Calu3 (cell line): ENCODE measurements at regions of chr21 and their contacts with region 1.

Region 1: DNA sequence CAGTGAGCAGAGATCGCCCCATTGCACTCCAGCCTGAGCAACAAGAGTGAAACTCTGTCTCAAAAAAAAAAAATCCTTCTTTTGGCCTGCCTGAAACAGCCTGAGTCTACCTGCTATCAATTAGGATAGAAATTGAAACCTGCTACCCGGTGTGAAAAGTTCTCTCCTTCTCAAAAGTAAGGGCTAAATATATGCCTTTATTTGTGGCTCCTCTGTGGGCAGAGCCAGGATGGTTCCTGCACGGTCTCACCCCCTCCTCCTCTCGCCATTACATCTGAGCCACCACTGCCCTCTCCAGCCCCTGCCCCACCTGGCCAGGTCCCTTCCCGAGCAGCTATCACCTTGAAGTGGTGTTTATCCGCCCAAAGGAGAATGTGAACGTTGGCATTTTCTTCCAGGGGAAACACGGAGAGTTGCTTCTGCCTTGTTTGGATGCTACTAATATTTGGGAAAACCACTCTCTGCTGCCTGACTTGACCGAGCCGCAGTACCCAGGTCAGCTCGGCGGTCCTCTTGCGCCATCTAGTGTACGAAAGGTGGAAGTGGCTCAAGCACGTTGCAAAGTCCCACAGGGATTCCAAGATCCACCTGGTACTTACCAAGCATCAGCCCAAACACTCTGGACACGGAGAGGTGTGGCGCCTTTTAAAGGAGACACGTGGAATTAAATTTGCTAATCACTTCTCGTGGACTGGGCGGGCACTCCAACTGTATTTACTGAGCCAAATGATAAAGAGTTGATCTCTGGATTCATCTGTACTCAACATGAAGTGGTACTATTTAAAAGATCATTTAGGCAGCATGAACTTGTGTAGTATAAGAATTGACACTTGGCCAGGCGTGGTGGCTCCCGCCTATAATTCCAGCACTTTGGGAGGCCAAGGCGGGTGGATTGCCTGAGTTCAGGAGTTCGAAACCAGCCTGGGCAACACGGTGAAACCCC is 31.9 kb downstream of the SETD4 start:
- DNase-seq: peak; percentile 65
- H3K4me3 Mint-ChIP-seq: no peak overlapping the region
- H3K27ac Mint-ChIP-seq: no peak overlapping the region
- H3K4me1 Mint-ChIP-seq: no peaks in the 10 kb centered on the region
- H3K27me3 Mint-ChIP-seq: no peaks in the 10 kb centered on the region
- CTCF ChIP-seq: peak; percentile 80

Region 2: GRCh38 chr21:35925497-35925896 is 102.9 kb before region 1 on chr21:
- CTCF ChIA-PET with region 1: no interaction called
- intact Hi-C with region 1: no loop called
- DNase-seq: peak; percentile 65
- H3K4me3 Mint-ChIP-seq: no peak overlapping the region
- H3K27ac Mint-ChIP-seq: peak overlapping the region; percentile 94
- H3K4me1 Mint-ChIP-seq: peaks cover 32% of the 10 kb centered on the region
- H3K27me3 Mint-ChIP-seq: no peaks in the 10 kb centered on the region
- CTCF ChIP-seq: no peak

Region 3: DNA sequence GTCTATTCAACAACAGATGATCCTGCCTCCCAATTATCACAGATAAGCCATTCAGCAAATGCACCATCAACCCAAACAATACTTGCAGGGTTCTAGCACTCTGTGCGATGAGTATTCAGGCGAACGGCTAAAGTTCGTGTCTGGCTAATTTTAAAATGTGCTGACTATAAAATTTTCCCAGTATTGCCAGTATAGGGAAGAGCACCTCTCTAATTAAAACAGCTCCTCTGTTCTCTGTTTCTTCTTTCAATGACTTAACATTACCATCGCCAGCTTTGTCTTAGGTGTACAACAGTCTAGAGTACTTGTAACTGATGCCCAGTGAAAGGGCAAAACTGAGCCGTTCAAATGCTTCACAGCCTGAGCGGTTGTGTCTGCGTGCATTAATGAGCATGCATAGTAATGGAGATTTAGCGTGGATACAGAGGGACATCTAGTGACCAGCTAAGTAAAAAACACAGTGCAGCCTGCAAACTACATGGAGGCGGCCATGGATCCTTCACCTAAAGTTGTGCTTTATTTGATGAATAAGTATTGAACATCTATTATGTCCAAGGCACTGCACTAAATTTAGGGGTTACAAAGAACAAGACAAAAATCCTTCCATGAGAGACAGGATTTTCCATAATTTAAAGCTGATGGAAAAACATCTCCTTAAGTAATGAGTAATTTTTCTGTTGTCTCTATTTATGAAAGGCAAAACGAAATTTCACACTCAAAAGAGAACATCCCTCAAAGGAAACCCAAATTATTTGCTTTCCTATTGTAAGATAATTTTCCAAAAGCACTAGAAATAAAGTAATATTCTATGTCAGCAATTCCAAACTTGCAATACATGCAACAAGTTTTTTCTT is 88.1 kb before region 1 on chr21:
- CTCF ChIA-PET with region 1: no interaction called
- intact Hi-C with region 1: loop called (anchors 5 kb)
- DNase-seq: peak; percentile 41
- H3K4me3 Mint-ChIP-seq: no peak overlapping the region
- H3K27ac Mint-ChIP-seq: no peak overlapping the region
- H3K4me1 Mint-ChIP-seq: no peaks in the 10 kb centered on the region
- H3K27me3 Mint-ChIP-seq: no peaks in the 10 kb centered on the region
- CTCF ChIP-seq: no peak

Region 4: GRCh38 chr21:36047139-36047538 is 18.7 kb after region 1 on chr21:
- CTCF ChIA-PET with region 1: no interaction called
- intact Hi-C with region 1: no loop called
- DNase-seq: no peak
- H3K4me3 Mint-ChIP-seq: no peak overlapping the region
- H3K27ac Mint-ChIP-seq: no peak overlapping the region
- H3K4me1 Mint-ChIP-seq: no peaks in the 10 kb centered on the region
- H3K27me3 Mint-ChIP-seq: no peaks in the 10 kb centered on the region
- CTCF ChIP-seq: no peak